Endothelial cell of umbilical vein (primary cell): ENCODE measurements at regions of chrX and their contacts with region 1.

Region 1: GRCh38 chrX:10119399-10119990 is 37.3 kb upstream of the CLCN4 start:
- DNase-seq: peak; percentile 81
- H3K4me3 ChIP-seq: no peak overlapping the region
- H3K27ac ChIP-seq: no peak overlapping the region
- H3K4me1 ChIP-seq: no peaks in the 10 kb centered on the region
- H3K27me3 ChIP-seq: no peaks in the 10 kb centered on the region
- CTCF ChIP-seq: peak; percentile 76 to 99
- POLR2A ChIP-seq: no peak

Region 2: GRCh38 chrX:9885150-9885549 is 234.3 kb before region 1 on chrX:
- CTCF ChIA-PET with region 1: interaction called, 16 read pairs
- POLR2A ChIA-PET with region 1: no interaction called
- dilution Hi-C with region 1: no loop called
- intact Hi-C with region 1: loop called (anchors 1 kb)
- DNase-seq: peak; percentile 85
- H3K4me3 ChIP-seq: no peak overlapping the region
- H3K27ac ChIP-seq: no peak overlapping the region
- H3K4me1 ChIP-seq: peaks cover 41% of the 10 kb centered on the region
- H3K27me3 ChIP-seq: no peaks in the 10 kb centered on the region
- CTCF ChIP-seq: peak; percentile 56 to 76
- POLR2A ChIP-seq: no peak

Region 3: GRCh38 chrX:9988762-9989161 is 130.7 kb before region 1 on chrX:
- CTCF ChIA-PET with region 1: interaction called, 26 read pairs
- POLR2A ChIA-PET with region 1: no interaction called
- dilution Hi-C with region 1: no loop called
- intact Hi-C with region 1: loop called (anchors 1 kb)
- DNase-seq: peak; percentile 35
- H3K4me3 ChIP-seq: no peak overlapping the region
- H3K27ac ChIP-seq: no peak overlapping the region
- H3K4me1 ChIP-seq: no peaks in the 10 kb centered on the region
- H3K27me3 ChIP-seq: no peaks in the 10 kb centered on the region
- CTCF ChIP-seq: peak; percentile 15 to 34
- POLR2A ChIP-seq: no peak

Region 4: DNA sequence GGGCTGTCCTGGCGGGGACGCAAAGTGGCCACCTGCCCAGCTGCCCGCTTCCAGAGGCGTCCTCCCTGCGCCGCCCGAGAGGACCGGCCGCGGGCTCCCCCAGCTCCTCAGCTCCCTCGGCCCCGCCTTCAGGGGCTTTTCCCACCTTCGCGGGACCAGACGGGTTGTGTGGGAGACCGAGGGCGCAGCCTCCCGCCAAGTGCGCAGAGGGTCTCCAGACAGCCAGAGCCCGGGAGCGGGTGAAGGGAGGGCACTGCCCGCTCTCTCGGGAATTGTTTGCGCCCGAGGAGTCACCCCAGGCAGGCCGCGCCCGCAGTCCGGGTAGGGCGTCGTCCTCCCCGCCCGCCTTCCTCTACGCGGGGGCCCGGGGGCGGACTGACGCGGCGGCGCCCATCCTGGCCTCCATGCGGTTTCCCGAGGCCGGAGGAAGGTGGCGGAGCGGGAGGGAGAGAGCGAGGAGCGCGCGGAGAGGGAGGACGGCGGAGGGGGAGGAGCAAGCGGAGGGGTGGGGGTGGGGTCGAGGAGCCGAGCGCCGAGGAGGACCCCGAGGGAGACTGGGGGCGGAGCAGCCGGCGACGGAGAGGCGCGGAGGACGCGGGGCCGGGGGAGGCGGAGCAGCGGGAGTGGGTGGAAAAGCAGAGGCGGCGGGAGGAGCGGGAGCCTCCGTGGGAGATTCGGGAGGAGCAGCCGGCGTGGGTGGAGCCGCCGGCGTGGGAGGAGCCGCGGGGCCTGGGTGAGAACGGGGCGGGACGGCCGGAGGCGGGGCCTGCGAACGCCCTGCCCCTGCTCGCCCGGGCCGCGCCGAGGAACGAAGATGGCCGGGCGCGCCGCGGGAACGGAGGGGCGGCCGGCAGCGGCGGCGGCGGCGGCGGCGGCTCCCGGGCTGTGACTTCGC is 104.8 kb before region 1 on chrX:
- CTCF ChIA-PET with region 1: interaction called, 8 read pairs
- POLR2A ChIA-PET with region 1: no interaction called
- dilution Hi-C with region 1: no loop called
- intact Hi-C with region 1: loop called (anchors 1 kb)
- DNase-seq: peak; percentile 87
- H3K4me3 ChIP-seq: peak overlapping the region in 2 of 3 experiments; percentile 31 to 83
- H3K27ac ChIP-seq: peak overlapping the region; percentile 88
- H3K4me1 ChIP-seq: peaks cover 51% of the 10 kb centered on the region
- H3K27me3 ChIP-seq: no peaks in the 10 kb centered on the region
- CTCF ChIP-seq: no peak
- POLR2A ChIP-seq: no peak

Region 5: DNA sequence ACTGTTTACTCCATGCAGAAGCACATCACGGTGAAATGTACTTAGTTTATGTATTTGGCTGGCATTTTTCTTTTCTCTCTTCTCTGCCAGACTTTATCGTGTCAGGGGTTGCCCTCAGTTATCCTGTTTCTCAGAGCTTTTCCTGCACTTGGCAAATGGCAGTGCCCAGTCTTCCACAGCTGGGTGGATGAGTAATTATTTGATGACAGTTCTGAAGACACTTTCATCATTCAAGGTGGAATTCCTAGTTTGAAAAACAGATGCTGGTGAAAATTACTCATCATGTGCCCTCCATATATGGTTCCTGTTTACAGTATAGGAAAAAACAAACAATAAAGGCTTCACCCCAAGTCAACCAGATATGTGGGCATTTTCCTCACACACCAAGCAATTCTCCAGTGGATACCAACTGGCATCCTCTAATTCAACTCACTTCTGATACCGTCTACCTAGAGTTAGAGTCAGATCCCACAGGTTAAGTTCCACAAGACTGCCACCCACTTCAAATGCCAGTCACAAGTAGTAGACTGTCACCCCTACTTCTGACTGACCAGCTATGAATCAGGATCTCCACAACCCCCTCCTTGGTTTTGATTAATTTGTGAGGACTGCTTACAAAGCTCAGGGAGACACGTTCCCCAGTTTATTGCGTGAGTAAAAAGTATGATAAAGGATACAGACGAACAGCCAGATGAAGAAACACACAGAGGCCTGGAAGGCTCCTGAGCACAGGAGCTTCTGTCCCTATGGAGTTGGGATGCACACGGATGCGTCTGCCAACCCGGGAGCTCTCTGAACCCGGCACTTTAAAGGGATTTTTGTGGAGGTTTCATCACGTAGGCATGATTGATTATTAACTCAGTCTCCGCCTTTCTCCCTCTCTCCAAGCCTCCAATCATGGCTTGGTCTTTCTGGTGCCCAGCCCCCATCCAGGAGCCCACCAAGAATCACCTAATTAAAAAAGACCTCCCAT is 79.4 kb before region 1 on chrX:
- CTCF ChIA-PET with region 1: no interaction called
- POLR2A ChIA-PET with region 1: no interaction called
- dilution Hi-C with region 1: no loop called
- intact Hi-C with region 1: no loop called
- DNase-seq: peak; percentile 63
- H3K4me3 ChIP-seq: no peak overlapping the region
- H3K27ac ChIP-seq: peak overlapping the region; percentile 53
- H3K4me1 ChIP-seq: peaks cover 28% of the 10 kb centered on the region
- H3K27me3 ChIP-seq: no peaks in the 10 kb centered on the region
- CTCF ChIP-seq: no peak
- POLR2A ChIP-seq: no peak

Region 6: DNA sequence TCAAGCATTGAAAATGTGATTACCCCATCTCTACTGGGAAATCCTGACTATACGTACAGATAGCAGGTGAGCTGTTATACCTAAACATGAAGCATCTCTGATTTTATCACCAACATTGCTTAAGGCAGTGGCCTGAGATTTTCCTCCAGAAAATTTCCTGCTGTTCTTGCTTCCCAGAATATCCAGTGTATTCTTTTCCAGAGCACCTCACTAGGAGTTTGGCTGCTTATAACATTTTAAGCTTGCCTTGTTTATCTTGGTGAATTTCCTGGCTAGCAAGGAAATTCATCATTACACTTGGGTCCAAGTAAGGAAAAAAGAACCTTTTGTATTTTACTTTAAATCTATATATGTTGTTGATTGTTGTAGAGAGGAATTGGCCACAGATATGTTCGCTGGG is 35.7 kb before region 1 on chrX:
- CTCF ChIA-PET with region 1: interaction called, 15 read pairs
- POLR2A ChIA-PET with region 1: no interaction called
- dilution Hi-C with region 1: no loop called
- intact Hi-C with region 1: no loop called
- DNase-seq: peak; percentile 17
- H3K4me3 ChIP-seq: no peak overlapping the region
- H3K27ac ChIP-seq: peak overlapping the region; percentile 55
- H3K4me1 ChIP-seq: peaks cover 41% of the 10 kb centered on the region
- H3K27me3 ChIP-seq: no peaks in the 10 kb centered on the region
- CTCF ChIP-seq: no peak
- POLR2A ChIP-seq: no peak